ENCODE measurements at regions of chr6 and their contacts with region 1.

Region 1: DNA sequence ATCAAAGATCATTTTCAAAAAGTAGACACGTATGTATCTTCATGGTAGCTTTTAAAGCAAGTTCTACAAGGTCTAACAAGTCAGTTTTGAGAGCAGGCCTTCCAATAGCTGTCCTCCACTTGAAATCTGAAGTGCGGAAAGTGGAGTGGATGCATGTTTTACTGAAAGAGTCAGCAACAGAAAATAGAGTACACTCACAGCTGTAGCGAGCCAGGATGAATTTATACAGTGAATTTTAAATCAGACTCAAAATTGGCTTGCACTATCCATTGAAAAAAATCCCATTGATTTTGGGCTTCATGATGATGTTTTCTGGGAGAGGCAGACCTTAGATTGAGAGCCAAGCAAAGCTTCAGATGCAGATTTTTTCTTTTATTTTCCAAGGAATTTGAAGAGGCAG is 80.6 kb downstream of the GJA10 start:
- DNase-seq: no peak
- H3K4me3 ChIP-seq: no peak overlapping the region
- H3K27ac ChIP-seq: no peak overlapping the region
- H3K4me1 ChIP-seq: peaks cover 0 to 3% of the 10 kb centered on the region in 2 donors
- H3K27me3 ChIP-seq: no peaks in the 10 kb centered on the region
- CTCF ChIP-seq: no peak
- POLR2A ChIP-seq: no peak

Region 2: GRCh38 chr6:89944826-89945407 is 29.9 kb before region 1 on chr6:
- intact Hi-C with region 1: loop called (anchors 1 kb)
- DNase-seq: no peak
- H3K4me3 ChIP-seq: no peak overlapping the region
- H3K27ac ChIP-seq: no peak overlapping the region
- H3K4me1 ChIP-seq: no peaks in the 10 kb centered on the region
- H3K27me3 ChIP-seq: no peaks in the 10 kb centered on the region
- CTCF ChIP-seq: no peak
- POLR2A ChIP-seq: no peak

Measured in breast epithelium (tissue), 4 donors.